Sigmoid colon (tissue), 7 donors: ENCODE measurements at regions of chr5 and their contacts with region 1.

Region 1: DNA sequence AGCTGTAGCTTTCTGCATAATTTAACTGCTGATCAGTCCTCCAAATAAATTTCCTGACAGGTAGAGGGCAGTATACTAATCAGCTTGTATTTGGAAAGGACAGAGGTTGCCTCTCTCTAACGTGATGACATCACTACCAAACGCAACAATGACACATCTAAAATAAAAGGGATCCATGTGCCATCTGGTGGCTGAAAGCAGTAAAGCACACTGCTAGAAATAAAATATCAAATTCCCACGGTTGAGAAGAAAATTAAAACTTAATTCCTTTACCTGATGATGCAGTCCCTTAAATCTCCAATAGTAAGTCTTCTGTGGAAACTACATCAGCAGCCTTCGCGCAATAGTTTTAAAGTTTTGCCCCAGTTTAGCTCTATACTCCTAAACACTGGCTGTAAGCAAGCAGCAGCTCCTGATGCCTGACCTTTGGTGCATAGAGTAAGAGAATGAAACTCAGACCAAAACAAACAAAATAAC is 54.5 kb downstream of the DIAPH1 start:
- DNase-seq: peak; percentile 72
- H3K4me3 ChIP-seq: no peak overlapping the region
- H3K27ac ChIP-seq: peak overlapping the region; percentile 51 to 67 (median 58)
- H3K4me1 ChIP-seq: peaks cover 0 to 22% (median 20%) of the 10 kb centered on the region in 4 donors
- H3K27me3 ChIP-seq: no peaks in the 10 kb centered on the region
- CTCF ChIP-seq: peak; percentile 91 to 97 (median 95)
- EP300 ChIP-seq: peak in 1 of 4 donors; percentile 32
- POLR2A ChIP-seq: no peak

Region 2: GRCh38 chr5:141084487-141084990 is 479.7 kb before region 1 on chr5:
- intact Hi-C with region 1: loop called (anchors 5 kb)
- DNase-seq: no peak
- H3K4me3 ChIP-seq: peak overlapping the region; percentile 6 to 50 (median 44)
- H3K27ac ChIP-seq: peak overlapping the region; percentile 60 to 69 (median 64)
- H3K4me1 ChIP-seq: no peaks in the 10 kb centered on the region
- H3K27me3 ChIP-seq: peaks cover 0 to 10% (median 0%) of the 10 kb centered on the region in 3 donors
- CTCF ChIP-seq: peak; percentile 10 to 57 (median 34)
- EP300 ChIP-seq: no peak
- POLR2A ChIP-seq: no peak

Region 3: GRCh38 chr5:141182248-141182647 is 382.0 kb before region 1 on chr5 and contains the start of gene PCDHB16:
- intact Hi-C with region 1: loop called (anchors 1 kb)
- DNase-seq: peak; percentile 74
- H3K4me3 ChIP-seq: peak within 1 kb of the TSS; percentile 12 to 42 (median 32)
- H3K27ac ChIP-seq: peak within 1 kb of the TSS in 2 of 4 donors; percentile 20 to 25
- H3K4me1 ChIP-seq: no peaks in the 10 kb centered on the region
- H3K27me3 ChIP-seq: peaks cover 0 to 51% (median 4%) of the 10 kb centered on the region in 3 donors
- CTCF ChIP-seq: peak in 2 of 4 experiments; percentile 11 to 14
- EP300 ChIP-seq: no peak
- POLR2A ChIP-seq: no peak
- total RNA-seq, gene PCDHB16: 3.6 to 6.3 (median 4.8) TPM

Region 4: GRCh38 chr5:141223112-141223783 is 341.0 kb before region 1 on chr5 and contains the start of gene PCDHB14:
- intact Hi-C with region 1: loop called (anchors 5 kb)
- DNase-seq: no peak
- H3K4me3 ChIP-seq: peak within 1 kb of the TSS; percentile 11 to 34 (median 24)
- H3K27ac ChIP-seq: no peak within 1 kb of the TSS
- H3K4me1 ChIP-seq: peaks cover 0 to 3% (median 0%) of the 10 kb centered on the region in 4 donors
- H3K27me3 ChIP-seq: no peaks in the 10 kb centered on the region
- CTCF ChIP-seq: no peak
- EP300 ChIP-seq: no peak
- POLR2A ChIP-seq: no peak
- total RNA-seq, gene PCDHB14: 6.3 to 10.5 (median 8.3) TPM

Region 5: GRCh38 chr5:142334538-142334937 is 770.3 kb after region 1 on chr5:
- intact Hi-C with region 1: no loop called
- DNase-seq: peak; percentile 2
- H3K4me3 ChIP-seq: no peak overlapping the region
- H3K27ac ChIP-seq: no peak overlapping the region
- H3K4me1 ChIP-seq: peaks cover 0 to 3% (median 0%) of the 10 kb centered on the region in 4 donors
- H3K27me3 ChIP-seq: peaks cover 0 to 7% (median 0%) of the 10 kb centered on the region in 3 donors
- CTCF ChIP-seq: no peak
- EP300 ChIP-seq: no peak
- POLR2A ChIP-seq: no peak